Common myeloid progenitor, CD34-positive (primary cell): ENCODE measurements at regions of chr7 and their contacts with region 1.

Region 1: GRCh38 chr7:87152107-87152844 is at the start of gene DMTF1:
- DNase-seq: peak; percentile 91 to 96 (median 96)
- H3K4me3 ChIP-seq: peak within 1 kb of the TSS; percentile 88 to 99 (median 94)
- H3K27ac ChIP-seq: peak within 1 kb of the TSS; percentile 96 to 98
- H3K4me1 ChIP-seq: peaks cover 6 to 39% (median 20%) of the 10 kb centered on the region in 4 experiments
- H3K27me3 ChIP-seq: no peaks in the 10 kb centered on the region

Region 2: DNA sequence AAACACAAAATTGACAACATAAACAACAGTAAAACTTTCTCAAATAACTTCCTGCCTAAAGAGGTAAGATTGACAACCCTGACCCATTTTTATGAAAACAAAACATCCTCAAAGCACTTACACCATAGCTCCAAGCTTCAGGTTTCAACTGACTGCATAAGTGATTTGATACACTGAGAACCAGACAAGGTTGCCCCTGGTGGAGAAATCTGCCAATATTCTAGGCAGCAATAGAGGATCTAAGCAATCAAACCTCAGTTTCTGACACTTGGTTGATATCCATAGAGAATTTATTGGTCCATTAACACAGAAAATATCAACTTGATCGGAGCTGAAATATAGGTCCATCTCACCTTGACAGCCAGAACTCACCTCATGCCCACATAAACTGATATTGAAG is 240.6 kb before region 1 on chr7:
- CTCF ChIA-PET with region 1: interaction called, 10 read pairs
- POLR2A ChIA-PET with region 1: no interaction called
- DNase-seq: no peak
- H3K4me3 ChIP-seq: no peak overlapping the region
- H3K27ac ChIP-seq: no peak overlapping the region
- H3K4me1 ChIP-seq: no peaks in the 10 kb centered on the region
- H3K27me3 ChIP-seq: no peaks in the 10 kb centered on the region

Region 3: DNA sequence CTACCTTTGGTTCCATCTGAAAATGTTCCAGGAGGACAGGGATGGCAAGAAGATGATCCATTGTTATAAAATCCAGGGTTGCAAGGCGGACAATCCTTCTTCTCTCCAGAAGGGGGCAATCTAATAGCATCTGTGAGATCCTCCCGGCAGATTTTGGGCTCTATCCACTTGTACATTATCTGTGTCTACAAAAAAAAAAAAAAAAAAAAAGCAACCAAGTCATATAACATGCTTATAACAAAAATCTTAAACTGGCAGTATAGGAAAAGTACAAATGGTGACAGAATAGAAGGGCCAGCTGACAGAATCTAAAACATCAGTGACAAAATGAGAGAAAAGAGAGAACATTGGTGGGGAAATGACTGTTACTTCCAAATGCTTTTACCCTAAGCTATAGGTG is 225.5 kb before region 1 on chr7:
- CTCF ChIA-PET with region 1: interaction called, 45 read pairs
- POLR2A ChIA-PET with region 1: no interaction called
- DNase-seq: peak; percentile 47 to 63 (median 63)
- H3K4me3 ChIP-seq: no peak overlapping the region
- H3K27ac ChIP-seq: no peak overlapping the region
- H3K4me1 ChIP-seq: peaks cover 0 to 3% (median 0%) of the 10 kb centered on the region in 4 experiments
- H3K27me3 ChIP-seq: no peaks in the 10 kb centered on the region

Region 4: DNA sequence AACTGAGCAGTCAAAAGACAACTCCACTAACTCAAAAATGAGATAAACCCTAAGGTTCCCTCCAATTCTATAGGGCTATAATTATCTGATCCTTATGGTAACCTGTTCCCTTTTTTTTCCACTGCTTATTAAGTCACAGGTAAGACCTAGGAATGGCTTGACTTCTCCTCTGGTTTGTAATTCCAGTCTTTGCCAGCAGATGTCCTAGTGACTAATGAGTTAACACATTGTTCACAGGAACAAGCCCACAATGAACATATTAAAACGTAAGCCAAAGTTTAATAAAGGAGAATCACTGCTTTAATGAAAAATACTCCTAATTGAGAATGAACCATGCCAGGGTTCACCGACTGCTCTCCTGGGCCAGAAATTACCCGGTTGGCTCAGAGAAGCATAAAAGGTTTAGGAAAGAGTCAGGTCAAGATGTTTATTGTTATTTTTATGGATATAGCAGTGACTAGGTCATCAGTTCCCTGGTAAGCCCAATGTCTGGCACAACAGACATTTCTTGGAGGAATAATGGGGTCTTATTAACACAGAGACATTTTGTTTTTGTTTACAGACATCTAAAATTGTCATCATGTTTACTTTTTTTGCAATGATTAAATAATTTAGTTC is 213.0 kb before region 1 on chr7:
- CTCF ChIA-PET with region 1: interaction called, 40 read pairs
- POLR2A ChIA-PET with region 1: no interaction called
- DNase-seq: peak; percentile 69 to 84 (median 80)
- H3K4me3 ChIP-seq: no peak overlapping the region
- H3K27ac ChIP-seq: no peak overlapping the region
- H3K4me1 ChIP-seq: no peaks in the 10 kb centered on the region
- H3K27me3 ChIP-seq: no peaks in the 10 kb centered on the region

Region 5: GRCh38 chr7:87059525-87060287 is 92.6 kb before region 1 on chr7 and contains the start of gene ELAPOR2:
- CTCF ChIA-PET with region 1: interaction called, 20 read pairs
- POLR2A ChIA-PET with region 1: interaction called, 3 read pairs
- DNase-seq: peak; percentile 77 to 92 (median 89)
- H3K4me3 ChIP-seq: peak within 1 kb of the TSS; percentile 68 to 92 (median 75)
- H3K27ac ChIP-seq: peak within 1 kb of the TSS in 1 of 2 experiments; percentile 41
- H3K4me1 ChIP-seq: peaks cover 7 to 14% (median 11%) of the 10 kb centered on the region in 4 experiments
- H3K27me3 ChIP-seq: peaks cover 0 to 2% (median 0%) of the 10 kb centered on the region in 5 experiments

Region 6: GRCh38 chr7:87173471-87173870 is 21.2 kb after region 1 on chr7:
- CTCF ChIA-PET with region 1: interaction called, 15 read pairs
- POLR2A ChIA-PET with region 1: interaction called, 3 read pairs
- DNase-seq: no peak
- H3K4me3 ChIP-seq: no peak overlapping the region
- H3K27ac ChIP-seq: no peak overlapping the region
- H3K4me1 ChIP-seq: peaks cover 0 to 2% (median 0%) of the 10 kb centered on the region in 4 experiments
- H3K27me3 ChIP-seq: no peaks in the 10 kb centered on the region